Calu3 (cell line): ENCODE measurements at regions of chr11 and their contacts with region 1.

Region 1: GRCh38 chr11:67656278-67656922 is 5.9 kb upstream of the ACY3 start:
- DNase-seq: no peak
- H3K4me3 Mint-ChIP-seq: no peak overlapping the region
- H3K27ac Mint-ChIP-seq: no peak overlapping the region
- H3K4me1 Mint-ChIP-seq: peaks cover 18% of the 10 kb centered on the region
- H3K27me3 Mint-ChIP-seq: no peaks in the 10 kb centered on the region
- CTCF ChIP-seq: no peak

Region 2: DNA sequence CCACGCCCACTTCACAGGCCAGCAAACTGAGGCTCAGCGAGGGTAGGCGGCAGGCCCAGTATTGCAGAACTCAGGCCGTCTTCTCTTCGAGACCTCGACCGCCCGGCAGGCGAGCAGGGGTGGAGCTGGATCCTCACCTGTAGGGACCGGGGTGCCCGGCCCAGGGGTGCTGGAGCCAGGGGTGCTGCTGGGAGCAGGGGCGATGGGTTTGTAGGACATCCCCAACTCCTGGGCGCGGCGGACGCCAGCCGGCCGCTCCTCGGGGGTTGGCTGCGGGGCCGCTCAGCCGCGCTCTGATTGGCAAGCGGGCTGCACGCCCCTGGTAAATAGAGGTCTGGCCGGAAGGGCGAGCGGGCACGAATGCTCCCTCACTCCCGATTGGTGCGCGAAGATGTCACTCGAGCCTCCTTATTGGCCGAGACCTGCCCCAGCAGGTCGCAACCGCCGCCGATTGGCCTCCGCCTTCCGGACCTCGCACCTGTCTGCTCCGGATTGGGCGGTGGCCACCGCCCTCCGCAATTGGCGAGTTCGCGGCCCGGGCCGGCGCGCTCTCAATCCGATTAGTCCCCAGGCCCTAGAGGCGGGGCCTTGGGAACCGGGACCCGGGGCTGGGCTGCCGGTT is 148.4 kb before region 1 on chr11 and contains the start of gene CDK2AP2:
- CTCF ChIA-PET with region 1: no interaction called
- intact Hi-C with region 1: no loop called
- DNase-seq: peak; percentile 99
- H3K4me3 Mint-ChIP-seq: peak within 1 kb of the TSS; percentile 91
- H3K27ac Mint-ChIP-seq: peak within 1 kb of the TSS; percentile 99
- H3K4me1 Mint-ChIP-seq: peaks cover 31% of the 10 kb centered on the region
- H3K27me3 Mint-ChIP-seq: peaks cover 13% of the 10 kb centered on the region
- CTCF ChIP-seq: no peak
- total RNA-seq, gene CDK2AP2: 59.7 and 64.7 TPM in 2 replicates

Region 3: GRCh38 chr11:67572747-67573419 is 83.5 kb before region 1 on chr11:
- CTCF ChIA-PET with region 1: no interaction called
- intact Hi-C with region 1: loop called (anchors 10 kb)
- DNase-seq: peak; percentile 71
- H3K4me3 Mint-ChIP-seq: peak overlapping the region; percentile 39
- H3K27ac Mint-ChIP-seq: no peak overlapping the region
- H3K4me1 Mint-ChIP-seq: peaks cover 28% of the 10 kb centered on the region
- H3K27me3 Mint-ChIP-seq: no peaks in the 10 kb centered on the region
- CTCF ChIP-seq: peak; percentile 58

Region 4: DNA sequence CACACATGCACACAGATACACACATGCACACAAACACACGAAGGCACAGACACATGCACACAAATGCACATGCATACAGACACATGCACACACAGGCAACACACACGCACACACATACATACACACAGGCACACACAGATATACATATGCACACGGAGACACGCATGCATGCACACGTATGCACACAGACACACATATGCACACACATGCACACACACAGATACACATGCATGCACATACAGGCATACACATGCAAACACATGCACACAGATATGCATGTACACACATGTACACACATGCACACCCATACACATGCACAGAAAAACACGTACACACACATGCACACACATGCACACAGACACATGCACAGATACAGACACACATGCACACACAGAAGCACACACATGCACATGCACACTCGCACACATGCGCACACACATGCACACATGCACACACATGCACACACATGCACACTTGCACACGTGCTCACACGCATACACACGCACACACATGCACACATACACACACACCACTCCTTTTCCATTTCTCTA is 88.9 kb after region 1 on chr11:
- CTCF ChIA-PET with region 1: no interaction called
- intact Hi-C with region 1: no loop called
- DNase-seq: no peak
- H3K4me3 Mint-ChIP-seq: no peak overlapping the region
- H3K27ac Mint-ChIP-seq: no peak overlapping the region
- H3K4me1 Mint-ChIP-seq: no peaks in the 10 kb centered on the region
- H3K27me3 Mint-ChIP-seq: peaks cover 46% of the 10 kb centered on the region
- CTCF ChIP-seq: no peak

Region 5: DNA sequence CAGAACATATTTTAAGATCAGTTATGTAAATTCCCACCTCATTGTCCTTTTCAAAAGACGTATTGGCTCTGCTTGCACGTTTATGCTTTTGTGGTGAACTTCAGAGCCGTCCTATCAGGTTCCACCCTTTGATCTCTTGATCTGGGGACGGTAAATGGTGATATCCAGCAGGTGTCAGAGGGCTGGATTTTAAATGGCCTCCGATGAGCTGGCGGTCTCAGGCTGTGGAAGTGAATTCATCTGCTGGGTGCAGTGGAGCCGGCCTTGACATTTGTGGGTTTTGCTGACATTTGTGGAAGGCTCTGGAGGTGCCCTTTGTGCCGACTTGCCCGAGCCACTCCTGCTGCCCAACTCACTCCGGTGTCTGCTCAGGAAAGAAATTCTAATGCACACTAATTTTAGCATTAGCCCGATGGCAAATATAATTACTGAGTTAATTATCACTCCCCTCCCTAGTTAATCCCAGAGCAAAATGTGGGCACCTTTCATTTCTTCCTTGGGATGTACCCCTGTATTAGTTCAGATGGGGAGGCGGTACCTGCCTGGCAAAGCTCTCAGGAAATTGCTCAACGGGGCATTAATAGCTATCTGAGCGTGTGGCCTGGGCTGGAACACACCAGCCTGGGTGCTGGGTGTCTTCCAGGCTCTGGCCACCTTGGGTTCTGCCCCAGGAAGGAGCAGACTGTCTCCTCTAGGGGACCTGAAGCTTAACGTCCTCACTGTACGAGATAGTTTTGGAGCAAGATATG is 665.1 kb after region 1 on chr11:
- CTCF ChIA-PET with region 1: no interaction called
- intact Hi-C with region 1: no loop called
- DNase-seq: no peak
- H3K4me3 Mint-ChIP-seq: no peak overlapping the region
- H3K27ac Mint-ChIP-seq: no peak overlapping the region
- H3K4me1 Mint-ChIP-seq: peaks cover 31% of the 10 kb centered on the region
- H3K27me3 Mint-ChIP-seq: no peaks in the 10 kb centered on the region
- CTCF ChIP-seq: no peak